Activated CD8-positive, alpha-beta memory T cell treated with anti-CD3 and anti-CD28 coated beads, Interleukin-2, amount 10 ng/mL, durations not matched to agents 7 days and 5 days (primary cell): ENCODE measurements at regions of chr4 and their contacts with region 1.

Region 1: DNA sequence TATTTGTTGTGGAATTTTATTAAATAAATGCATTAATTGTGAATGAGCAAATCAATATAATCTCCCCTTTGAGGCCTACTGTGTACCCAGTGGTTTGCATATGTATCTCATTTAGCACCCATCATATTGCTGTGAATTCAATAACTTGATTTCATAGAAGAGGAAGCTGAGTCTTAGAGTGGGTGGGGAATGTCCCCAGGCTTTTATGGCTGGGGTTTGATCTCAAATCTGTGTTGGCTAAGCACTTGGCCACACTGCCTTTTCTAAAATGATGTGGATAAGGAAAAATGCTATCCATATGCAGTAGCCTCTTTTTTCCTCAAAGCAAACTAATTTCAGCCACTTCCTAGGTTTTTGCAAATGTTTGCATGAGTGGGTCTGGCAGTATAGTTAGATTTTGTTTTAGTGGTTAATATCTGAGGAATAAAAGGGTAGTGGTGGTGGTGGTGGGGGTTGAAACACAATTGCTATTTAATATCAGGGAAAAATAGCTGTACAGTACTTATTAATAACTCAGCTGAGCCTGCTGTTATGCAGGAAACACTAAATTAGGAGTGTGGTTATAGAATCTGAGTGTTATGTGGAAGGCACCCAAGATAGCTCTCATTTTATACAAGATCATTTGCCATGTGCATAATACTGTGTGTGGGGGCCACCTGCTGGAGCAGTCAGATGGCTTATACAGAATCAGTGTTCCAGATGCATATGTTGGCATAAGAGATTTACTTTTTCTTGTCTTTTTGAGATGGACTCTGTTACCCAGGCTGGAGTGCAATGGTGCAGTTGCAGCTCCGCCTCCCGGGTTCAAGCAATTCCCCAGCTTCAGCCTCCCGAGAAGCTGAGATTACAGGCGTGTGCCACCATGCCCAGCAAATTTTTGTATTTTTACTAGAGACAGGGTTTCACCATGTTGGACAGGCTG is 108.0 kb downstream of the TMEM131L start:
- DNase-seq: peak; percentile 85
- ATAC-seq: peak; percentile 97
- H3K4me3 Mint-ChIP-seq: no peak overlapping the region
- H3K27ac Mint-ChIP-seq: no peak overlapping the region
- H3K4me1 Mint-ChIP-seq: peaks cover 47% of the 10 kb centered on the region
- H3K27me3 Mint-ChIP-seq: no peaks in the 10 kb centered on the region

Region 2: GRCh38 chr4:153426207-153426885 is 147.8 kb before region 1 on chr4:
- CTCF ChIA-PET with region 1: interaction called, 22 read pairs
- DNase-seq: no peak
- ATAC-seq: peak; percentile 35
- H3K4me3 Mint-ChIP-seq: no peak overlapping the region
- H3K27ac Mint-ChIP-seq: peak overlapping the region; percentile 78
- H3K4me1 Mint-ChIP-seq: peaks cover 48% of the 10 kb centered on the region
- H3K27me3 Mint-ChIP-seq: peaks cover 2% of the 10 kb centered on the region

Region 3: DNA sequence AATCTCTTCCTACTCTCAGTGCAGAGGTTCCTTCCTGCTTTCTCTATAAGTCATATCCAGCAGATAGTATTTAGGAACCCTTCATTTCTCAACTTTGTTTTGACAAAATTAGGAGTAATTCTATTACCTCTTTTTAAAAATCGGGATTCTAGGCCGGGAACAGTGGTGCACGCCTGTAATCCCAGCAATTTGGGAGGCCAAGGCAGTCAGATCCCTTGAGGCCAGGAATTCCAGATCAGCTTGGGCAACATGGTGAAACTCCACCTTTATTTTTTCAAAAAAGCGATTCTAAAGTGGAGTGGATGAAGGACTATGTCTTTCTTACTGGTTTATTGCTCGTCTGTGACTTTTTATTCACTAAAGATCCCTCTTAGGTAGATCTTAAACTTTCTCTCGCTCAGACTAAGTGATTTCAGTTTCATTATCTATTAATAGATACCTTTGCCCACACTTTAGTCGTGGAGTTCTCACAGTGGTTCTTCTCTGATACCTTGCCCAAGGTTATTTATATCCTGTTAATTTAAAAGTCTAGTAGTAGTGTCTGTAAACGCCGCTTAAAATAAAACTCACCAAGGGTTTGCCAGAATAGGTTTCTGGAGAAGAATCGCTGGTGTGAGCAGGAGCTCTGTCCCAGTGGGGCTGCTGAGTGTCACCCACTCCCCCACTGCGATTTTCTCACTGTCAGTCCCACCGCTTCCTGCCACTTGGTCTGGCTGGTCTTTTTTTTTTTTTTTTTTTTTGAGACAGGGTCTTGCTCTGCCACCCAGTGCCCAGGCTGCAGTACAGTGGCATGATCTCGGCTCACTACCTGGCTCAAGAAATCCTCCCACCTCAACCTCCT is 135.0 kb before region 1 on chr4:
- CTCF ChIA-PET with region 1: interaction called, 61 read pairs
- DNase-seq: peak; percentile 62
- ATAC-seq: peak; percentile 88
- H3K4me3 Mint-ChIP-seq: peak overlapping the region; percentile 74
- H3K27ac Mint-ChIP-seq: peak overlapping the region; percentile 87
- H3K4me1 Mint-ChIP-seq: peaks cover 38% of the 10 kb centered on the region
- H3K27me3 Mint-ChIP-seq: peaks cover 4% of the 10 kb centered on the region

Region 4: DNA sequence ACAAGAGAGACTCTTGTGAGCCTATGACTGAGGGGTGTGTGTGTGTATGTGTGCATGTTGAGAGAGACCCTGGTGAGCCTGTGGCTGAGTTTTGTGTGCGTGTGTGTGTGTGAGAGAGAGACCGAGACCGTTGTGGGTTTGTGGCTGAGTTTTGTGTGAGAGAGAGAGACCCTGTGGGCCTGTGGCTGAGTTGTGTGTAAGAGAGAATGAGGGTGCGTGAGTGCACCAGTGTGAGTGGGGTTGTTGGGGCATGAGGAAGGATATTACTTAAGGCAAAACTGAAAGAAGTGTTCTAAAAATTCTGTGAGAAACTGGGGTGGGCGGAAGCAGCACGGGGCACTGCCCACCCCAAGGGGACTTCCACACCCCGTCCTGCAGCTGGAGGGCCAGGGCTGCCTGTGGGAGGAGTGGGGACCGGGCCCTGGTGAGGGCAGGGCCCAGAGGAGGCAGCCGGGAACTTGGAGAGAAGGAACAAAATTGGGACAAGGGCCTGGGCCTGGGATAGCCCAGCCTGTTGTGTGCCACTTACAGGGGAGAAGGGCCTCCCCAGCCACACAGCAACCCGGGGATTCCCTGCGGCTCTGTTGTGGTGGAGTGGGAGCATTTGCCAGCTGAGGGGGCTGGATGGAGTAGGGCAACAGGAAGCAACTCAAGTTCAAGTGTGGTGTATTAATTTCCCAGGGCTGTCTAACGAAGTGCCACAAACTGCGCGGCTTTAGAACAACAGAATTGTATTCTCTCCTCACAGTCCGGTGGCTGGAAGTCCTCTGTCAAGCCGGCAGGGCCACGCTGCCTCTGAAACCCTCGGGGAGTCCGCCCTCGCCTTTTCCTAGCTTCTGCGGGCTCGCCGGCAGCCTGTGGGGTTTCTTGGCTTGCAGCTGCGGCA is 85.9 kb before region 1 on chr4:
- CTCF ChIA-PET with region 1: interaction called, 14 read pairs
- DNase-seq: peak; percentile 79
- ATAC-seq: peak; percentile 62
- H3K4me3 Mint-ChIP-seq: peak overlapping the region; percentile 67
- H3K27ac Mint-ChIP-seq: peak overlapping the region; percentile 91
- H3K4me1 Mint-ChIP-seq: peaks cover 71% of the 10 kb centered on the region
- H3K27me3 Mint-ChIP-seq: no peaks in the 10 kb centered on the region

Region 5: GRCh38 chr4:153541456-153542096 is 32.6 kb before region 1 on chr4:
- CTCF ChIA-PET with region 1: interaction called, 11 read pairs
- DNase-seq: peak; percentile 65
- ATAC-seq: peak; percentile 82
- H3K4me3 Mint-ChIP-seq: no peak overlapping the region
- H3K27ac Mint-ChIP-seq: no peak overlapping the region
- H3K4me1 Mint-ChIP-seq: peaks cover 28% of the 10 kb centered on the region
- H3K27me3 Mint-ChIP-seq: no peaks in the 10 kb centered on the region